Dorsolateral prefrontal cortex (tissue), 120 donors: ENCODE measurements at regions of chr5 and their contacts with region 1.

Region 1: DNA sequence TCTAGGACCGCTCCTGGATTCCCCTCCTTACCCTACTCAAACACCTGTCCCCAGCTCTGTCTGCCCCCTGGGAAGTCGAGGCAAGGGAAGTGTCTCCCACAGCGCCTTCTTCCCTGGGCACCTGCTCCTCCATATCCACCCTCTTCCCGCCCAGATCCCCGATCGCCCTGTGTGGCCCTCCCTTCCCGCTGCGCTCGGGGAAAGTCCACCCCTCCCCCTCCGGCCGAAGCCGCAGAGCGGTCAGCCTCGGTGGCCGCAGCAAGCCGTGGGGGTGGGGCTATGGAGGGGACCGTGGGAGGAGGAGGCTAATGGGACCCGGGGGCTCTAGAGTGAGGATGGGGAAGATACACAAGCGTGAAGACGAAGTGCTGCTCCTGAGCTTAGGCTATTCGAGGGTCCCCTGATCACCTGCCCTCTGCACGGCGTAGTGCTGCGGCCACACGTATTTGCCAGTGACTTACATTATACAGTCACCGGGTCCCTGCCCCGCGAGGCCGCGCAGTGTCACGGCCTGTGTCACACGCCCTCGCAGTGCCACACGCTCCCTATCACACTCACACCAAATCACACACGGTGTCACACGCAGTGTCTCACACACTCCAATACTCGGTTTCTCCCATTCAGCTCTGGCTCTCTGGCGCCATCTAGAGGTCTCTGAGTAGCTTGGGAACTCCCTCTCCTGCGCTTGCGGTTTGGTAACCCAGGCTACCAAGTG is 658 bp upstream of the PCDH1 start:
- DNase-seq: peak; percentile 82 to 97 (median 94)
- H3K4me3 ChIP-seq: peak overlapping the region; percentile 65 to 97 (median 87)
- H3K27ac ChIP-seq: peak overlapping the region; percentile 90 to 99 (median 98)
- H3K27me3 ChIP-seq: no peaks in the 10 kb centered on the region
- CTCF ChIP-seq: peak; percentile 88 to 99 (median 98)

Region 2: DNA sequence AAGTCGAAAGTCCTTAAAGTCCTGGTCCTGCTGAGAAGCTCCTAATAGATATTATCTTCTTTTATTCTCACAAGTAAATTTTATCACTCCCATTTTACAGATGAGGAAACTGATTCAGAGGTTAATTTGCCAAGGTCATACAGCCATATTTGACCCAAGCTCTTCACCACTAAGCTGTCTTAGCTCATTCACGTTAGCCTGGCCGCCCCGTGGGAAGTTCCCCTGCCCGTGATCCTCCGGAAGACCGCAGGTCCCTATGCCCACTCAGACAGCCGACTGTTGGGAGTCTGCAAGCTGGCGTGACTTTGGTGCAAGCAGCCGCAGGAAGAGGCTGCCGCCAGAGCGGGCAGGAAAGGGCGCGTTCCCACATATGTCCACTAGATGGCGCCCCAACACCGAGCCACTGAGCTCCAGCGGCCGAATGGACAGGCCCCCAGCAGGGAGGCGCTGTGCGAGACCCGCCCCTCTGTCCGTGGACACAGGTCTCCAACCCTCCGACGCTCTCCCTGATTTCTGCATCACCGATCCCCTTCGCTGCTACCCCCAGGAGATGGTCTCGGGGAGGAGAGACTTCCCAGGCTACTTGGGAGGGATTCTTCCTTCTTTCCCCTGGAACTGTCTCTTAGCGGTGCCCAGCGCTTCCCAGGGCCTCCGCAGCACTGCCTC is 186.9 kb before region 1 on chr5:
- intact Hi-C with region 1: loop called (anchors 2 kb)
- DNase-seq: peak; percentile 82 to 92 (median 88)
- H3K4me3 ChIP-seq: peak overlapping the region in 57 of 59 donors; percentile 8 to 67 (median 47)
- H3K27ac ChIP-seq: peak overlapping the region in 48 of 59 donors; percentile 1 to 88 (median 72)
- H3K27me3 ChIP-seq: no peaks in the 10 kb centered on the region
- CTCF ChIP-seq: peak; percentile 94 to 100 (median 100)

Region 3: GRCh38 chr5:141747152-141748141 is 131.4 kb before region 1 on chr5:
- intact Hi-C with region 1: loop called (anchors 2 to 5 kb)
- DNase-seq: peak; percentile 94 to 98 (median 96)
- H3K4me3 ChIP-seq: peak overlapping the region in 28 of 59 donors; percentile 1 to 47 (median 25)
- H3K27ac ChIP-seq: peak overlapping the region; percentile 2 to 94 (median 83)
- H3K27me3 ChIP-seq: no peaks in the 10 kb centered on the region
- CTCF ChIP-seq: peak in 9 of 56 donors; percentile 11 to 42 (median 22)

Region 4: GRCh38 chr5:141805874-141806595 is 72.8 kb before region 1 on chr5:
- intact Hi-C with region 1: no loop called
- DNase-seq: no peak
- H3K4me3 ChIP-seq: no peak overlapping the region
- H3K27ac ChIP-seq: peak overlapping the region in 37 of 59 donors; percentile 2 to 74 (median 44)
- H3K27me3 ChIP-seq: no peaks in the 10 kb centered on the region
- CTCF ChIP-seq: no peak

Region 5: DNA sequence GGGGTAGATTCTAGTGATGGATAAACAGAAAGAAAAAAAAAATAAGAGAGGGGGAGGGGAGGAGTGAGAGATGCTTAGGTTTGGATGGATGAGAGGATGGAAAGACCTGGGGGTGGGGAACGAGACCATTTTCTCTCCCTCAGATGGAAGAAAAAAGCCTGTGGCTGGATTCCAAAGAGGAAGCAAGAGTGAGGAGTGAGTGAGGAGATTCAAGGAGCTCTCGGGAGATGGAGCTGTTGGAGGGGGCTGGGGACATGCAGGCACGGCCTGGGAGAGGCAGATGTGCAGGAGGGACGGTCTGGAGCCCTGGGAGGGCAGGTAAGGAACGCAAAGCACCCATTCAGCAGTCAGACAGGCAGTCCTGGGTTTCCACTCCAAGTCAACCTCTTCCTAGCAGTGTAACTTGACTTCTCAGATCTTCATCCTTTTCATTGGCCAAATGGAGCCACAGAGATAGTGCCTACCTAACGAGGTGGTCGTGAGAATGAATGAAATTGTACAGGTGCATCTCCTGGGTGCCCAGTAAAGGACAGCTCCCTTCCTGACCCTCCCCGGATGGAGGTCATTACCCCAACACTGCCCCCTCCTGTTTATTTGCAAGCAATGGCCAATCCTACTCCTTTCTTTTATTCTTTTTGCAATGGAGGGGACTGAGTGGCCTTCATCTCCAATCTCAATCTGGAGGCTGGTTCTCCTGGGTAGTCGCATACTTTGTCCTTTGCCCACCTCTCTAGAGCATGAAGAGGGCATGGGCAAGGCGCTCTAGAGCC is 52.9 kb before region 1 on chr5:
- intact Hi-C with region 1: loop called (anchors 2 to 5 kb)
- DNase-seq: no peak
- H3K4me3 ChIP-seq: peak overlapping the region in 30 of 59 donors; percentile 8 to 56 (median 36)
- H3K27ac ChIP-seq: peak overlapping the region in 58 of 59 donors; percentile 15 to 98 (median 91)
- H3K27me3 ChIP-seq: no peaks in the 10 kb centered on the region
- CTCF ChIP-seq: peak in 54 of 56 donors; percentile 26 to 71 (median 54)

Region 6: GRCh38 chr5:141914199-141914743 is 35.4 kb after region 1 on chr5:
- intact Hi-C with region 1: loop called (anchors 2 to 5 kb)
- DNase-seq: peak; percentile 38 to 79 (median 54)
- H3K4me3 ChIP-seq: peak overlapping the region; percentile 27 to 67 (median 50)
- H3K27ac ChIP-seq: peak overlapping the region in 58 of 59 donors; percentile 6 to 90 (median 76)
- H3K27me3 ChIP-seq: no peaks in the 10 kb centered on the region
- CTCF ChIP-seq: peak in 55 of 56 donors; percentile 32 to 89 (median 73)

Region 7: GRCh38 chr5:141960449-141961202 is 81.8 kb after region 1 on chr5:
- intact Hi-C with region 1: loop called (anchors 5 kb)
- DNase-seq: peak; percentile 83 to 94 (median 89)
- H3K4me3 ChIP-seq: peak overlapping the region in 11 of 59 donors; percentile 6 to 39 (median 24)
- H3K27ac ChIP-seq: peak overlapping the region in 50 of 59 donors; percentile 1 to 80 (median 56)
- H3K27me3 ChIP-seq: no peaks in the 10 kb centered on the region
- CTCF ChIP-seq: peak; percentile 82 to 98 (median 94)

Region 8: GRCh38 chr5:142779163-142779840 is 900.4 kb after region 1 on chr5:
- intact Hi-C with region 1: no loop called
- DNase-seq: peak in 1 of 10 donors; percentile 75
- H3K4me3 ChIP-seq: no peak overlapping the region
- H3K27ac ChIP-seq: peak overlapping the region in 2 of 59 donors; percentile 12 to 64
- H3K27me3 ChIP-seq: no peaks in the 10 kb centered on the region
- CTCF ChIP-seq: no peak